ENCODE measurements at regions of chr2 and their contacts with region 1.

Region 1: DNA sequence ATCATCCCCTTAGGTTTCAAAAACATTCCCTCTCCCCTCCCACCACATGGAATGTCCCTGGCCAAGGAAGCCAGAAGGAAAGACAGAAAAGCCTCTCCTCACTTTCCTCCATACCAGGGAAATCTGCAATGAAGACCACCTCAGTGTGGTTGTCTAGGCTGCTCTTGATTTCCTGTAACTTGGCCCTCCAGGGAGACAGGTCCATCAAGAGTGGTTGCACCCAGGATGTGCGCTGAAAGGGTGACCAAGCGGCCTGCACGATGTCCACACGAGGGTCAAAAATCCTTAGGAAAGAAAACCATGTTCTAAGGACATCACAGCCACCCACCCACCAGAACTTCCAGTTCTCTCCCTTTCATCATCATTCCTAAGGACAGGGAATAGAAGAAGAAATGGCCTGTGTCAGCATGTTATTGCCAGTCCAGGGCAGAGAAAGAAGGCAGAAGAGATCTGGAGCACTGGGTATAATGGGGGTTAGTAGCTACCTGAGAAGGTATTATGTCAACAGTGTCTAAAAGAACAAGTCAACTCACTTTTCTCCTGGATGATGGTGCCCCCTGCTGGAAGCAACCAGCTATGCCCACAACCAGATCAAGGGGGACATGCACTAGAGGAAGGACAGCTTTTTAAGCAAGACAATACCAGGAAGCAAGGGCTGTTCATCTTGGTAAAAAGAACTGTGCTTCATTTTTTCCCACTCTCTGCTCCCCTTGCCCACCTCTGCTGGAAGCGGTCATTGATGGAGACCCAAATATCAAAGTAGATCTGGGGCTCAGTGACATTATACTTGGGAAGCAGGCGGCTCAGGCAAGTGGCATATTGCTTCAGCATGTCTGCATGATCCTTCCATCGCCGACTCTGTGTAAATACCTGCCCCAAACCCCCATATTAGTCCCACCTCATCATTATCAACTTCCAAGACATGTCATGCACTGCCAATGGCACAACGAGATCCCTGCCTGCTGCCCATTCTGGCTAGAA is 9.3 kb downstream of the GGCX start:
- DNase-seq: peak; percentile 71 to 83 (median 79)
- H3K4me3 ChIP-seq: no peak overlapping the region
- H3K4me3 Mint-ChIP-seq: no peak overlapping the region
- H3K27ac ChIP-seq: peak overlapping the region in 1 of 2 donors; percentile 61
- H3K27ac Mint-ChIP-seq: peak overlapping the region; percentile 3 to 80 (median 67)
- H3K4me1 ChIP-seq: peaks cover 19 to 27% of the 10 kb centered on the region in 2 donors
- H3K4me1 Mint-ChIP-seq: peaks cover 28% of the 10 kb centered on the region
- H3K27me3 ChIP-seq: no peaks in the 10 kb centered on the region
- H3K27me3 Mint-ChIP-seq: peaks cover 0 to 2% (median 0%) of the 10 kb centered on the region in 3 donors
- CTCF ChIP-seq: peak; percentile 89

Region 2: DNA sequence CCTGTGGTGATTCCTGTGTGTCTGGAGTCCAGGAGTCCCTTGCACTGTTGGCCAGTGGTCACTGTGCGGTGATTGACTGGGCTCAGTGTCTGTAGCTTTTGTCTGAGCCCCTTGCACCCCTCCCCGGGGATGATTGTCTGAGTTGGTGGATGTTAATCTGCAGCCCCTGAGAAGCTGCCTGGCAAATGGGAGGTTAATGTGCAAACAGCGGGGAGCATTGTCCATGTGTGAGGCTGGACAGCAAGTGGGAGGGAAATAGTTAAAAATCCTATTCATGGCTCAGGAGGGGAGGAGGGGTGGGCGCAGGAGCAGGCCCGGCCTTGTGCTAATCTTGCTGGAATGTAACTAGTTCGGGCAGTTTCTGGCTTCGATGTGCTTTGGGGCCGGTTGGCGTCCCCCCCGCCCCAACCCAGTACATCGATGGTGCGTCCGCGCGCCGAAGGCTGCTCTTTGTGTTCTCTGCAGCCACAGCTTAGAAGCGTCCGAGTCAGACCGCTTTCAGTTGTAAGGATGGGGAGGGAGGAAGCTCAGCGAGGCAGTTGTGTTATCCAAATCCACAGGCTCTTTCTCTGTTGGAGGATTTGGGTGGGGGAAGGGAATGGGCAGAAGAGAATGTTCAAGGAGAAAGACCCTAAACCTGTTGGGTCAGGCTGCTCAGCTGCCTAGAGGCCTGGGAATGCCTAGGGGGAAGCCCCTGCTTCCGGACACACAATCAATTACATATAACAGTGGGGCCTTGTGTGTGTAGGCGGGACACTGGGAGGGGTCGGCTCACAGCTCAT is 296.0 kb before region 1 on chr2:
- intact Hi-C with region 1: no loop called
- DNase-seq: no peak
- H3K4me3 ChIP-seq: no peak overlapping the region
- H3K4me3 Mint-ChIP-seq: no peak overlapping the region
- H3K27ac ChIP-seq: no peak overlapping the region
- H3K27ac Mint-ChIP-seq: peak overlapping the region in 1 of 7 donors; percentile 80
- H3K4me1 ChIP-seq: no peaks in the 10 kb centered on the region
- H3K4me1 Mint-ChIP-seq: no peaks in the 10 kb centered on the region
- H3K27me3 ChIP-seq: no peaks in the 10 kb centered on the region
- H3K27me3 Mint-ChIP-seq: peaks cover 0 to 3% (median 0%) of the 10 kb centered on the region in 3 donors
- CTCF ChIP-seq: no peak

Region 3: DNA sequence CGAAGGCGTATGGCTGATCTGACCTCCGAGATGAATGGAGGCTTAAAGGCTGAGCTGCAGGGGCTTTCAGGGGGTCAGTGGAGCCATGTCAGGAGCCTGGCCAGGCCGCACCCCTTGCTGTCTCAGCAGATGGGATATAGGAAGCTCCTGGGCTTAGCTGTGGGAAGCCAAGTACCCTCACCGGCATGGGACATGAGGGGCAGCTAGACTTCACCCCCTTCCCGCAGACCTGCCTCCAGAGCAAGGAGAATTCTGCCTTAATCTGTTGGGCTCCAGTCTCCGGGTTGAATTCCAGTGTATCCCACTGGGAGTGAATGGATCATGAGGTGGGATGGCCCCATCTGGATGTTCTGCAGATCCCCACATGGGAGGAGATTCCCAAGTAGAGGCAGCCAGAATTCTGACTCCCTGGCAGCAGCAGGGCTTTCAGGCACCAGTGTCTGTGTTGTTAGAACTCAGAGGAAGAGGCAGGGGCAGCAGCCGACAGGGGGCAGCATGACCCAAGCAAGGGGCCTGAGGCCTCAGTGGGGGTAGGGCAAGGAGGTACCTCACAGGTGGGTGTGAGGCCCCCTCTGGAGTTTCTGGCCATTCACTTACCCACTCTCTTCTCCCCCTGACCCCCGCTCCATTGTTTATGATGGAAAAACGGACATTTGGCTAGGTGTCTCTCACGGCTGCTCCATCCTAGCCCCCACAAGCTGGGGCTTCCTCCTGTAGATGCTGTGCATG is 160.9 kb before region 1 on chr2:
- intact Hi-C with region 1: loop called in 1 of 2 experiments (anchors 1 kb)
- DNase-seq: peak; percentile 37 to 57 (median 55)
- H3K4me3 ChIP-seq: no peak overlapping the region
- H3K4me3 Mint-ChIP-seq: no peak overlapping the region
- H3K27ac ChIP-seq: peak overlapping the region in 1 of 2 donors; percentile 45
- H3K27ac Mint-ChIP-seq: peak overlapping the region in 2 of 7 donors; percentile 50 to 87
- H3K4me1 ChIP-seq: peaks cover 0 to 6% of the 10 kb centered on the region in 2 donors
- H3K4me1 Mint-ChIP-seq: peaks cover 6% of the 10 kb centered on the region
- H3K27me3 ChIP-seq: no peaks in the 10 kb centered on the region
- H3K27me3 Mint-ChIP-seq: no peaks in the 10 kb centered on the region
- CTCF ChIP-seq: peak; percentile 81

Region 4: GRCh38 chr2:85401850-85402243 is 150.1 kb before region 1 on chr2:
- intact Hi-C with region 1: loop called in 1 of 2 experiments (anchors 5 kb)
- DNase-seq: peak; percentile 34 to 49 (median 42)
- H3K4me3 ChIP-seq: no peak overlapping the region
- H3K4me3 Mint-ChIP-seq: no peak overlapping the region
- H3K27ac ChIP-seq: peak overlapping the region; percentile 33 to 68
- H3K27ac Mint-ChIP-seq: peak overlapping the region; percentile 54 to 88 (median 83)
- H3K4me1 ChIP-seq: peaks cover 32 to 43% of the 10 kb centered on the region in 2 donors
- H3K4me1 Mint-ChIP-seq: peaks cover 36% of the 10 kb centered on the region
- H3K27me3 ChIP-seq: no peaks in the 10 kb centered on the region
- H3K27me3 Mint-ChIP-seq: no peaks in the 10 kb centered on the region
- CTCF ChIP-seq: no peak

Region 5: GRCh38 chr2:85511008-85511811 is 40.8 kb before region 1 on chr2:
- intact Hi-C with region 1: no loop called
- DNase-seq: peak in 2 of 3 donors; percentile 19 to 23
- H3K4me3 ChIP-seq: no peak overlapping the region
- H3K4me3 Mint-ChIP-seq: no peak overlapping the region
- H3K27ac ChIP-seq: peak overlapping the region in 1 of 2 donors; percentile 64
- H3K27ac Mint-ChIP-seq: peak overlapping the region in 2 of 7 donors; percentile 18 to 35
- H3K4me1 ChIP-seq: peaks cover 11 to 19% of the 10 kb centered on the region in 2 donors
- H3K4me1 Mint-ChIP-seq: peaks cover 19% of the 10 kb centered on the region
- H3K27me3 ChIP-seq: no peaks in the 10 kb centered on the region
- H3K27me3 Mint-ChIP-seq: peaks cover 0 to 5% (median 0%) of the 10 kb centered on the region in 3 donors
- CTCF ChIP-seq: no peak

Measured in CD14-positive monocyte (primary cell).